Panc1 (cell line): ENCODE measurements at regions of chr1 and their contacts with region 1.

Region 1: DNA sequence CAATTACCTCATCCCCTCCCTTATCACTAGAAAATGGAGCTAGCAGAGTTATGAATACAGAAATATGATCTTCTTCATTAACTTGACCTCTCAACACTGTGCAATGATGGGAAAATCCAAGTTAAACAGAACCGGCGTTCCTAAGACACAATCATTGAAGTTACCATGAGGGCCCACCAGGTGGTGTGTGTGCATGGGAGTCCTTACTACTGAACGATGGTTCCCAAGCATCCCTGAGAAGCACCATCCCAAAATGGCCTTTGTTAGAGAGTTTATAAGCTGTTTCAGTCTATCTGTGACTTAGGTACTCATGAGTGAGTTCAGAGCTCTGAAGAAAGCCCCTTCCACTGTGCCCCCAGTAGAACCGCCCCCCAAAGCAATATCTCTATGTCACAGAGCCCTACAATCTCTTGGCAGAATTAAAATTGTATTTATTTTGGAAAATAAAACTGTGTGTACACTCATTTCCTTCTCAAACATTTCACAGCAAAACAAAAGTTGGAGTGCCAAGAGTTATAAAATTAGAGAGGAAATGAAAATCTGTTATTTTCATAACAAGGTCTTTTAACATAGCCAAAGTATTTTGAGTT is 56.8 kb downstream of the PLD5 start:
- DNase-seq: peak; percentile 28
- ATAC-seq: peak; percentile 90
- H3K4me3 ChIP-seq: no peak overlapping the region
- H3K27ac ChIP-seq: no peak overlapping the region
- H3K4me1 ChIP-seq: no peaks in the 10 kb centered on the region
- H3K27me3 ChIP-seq: no peaks in the 10 kb centered on the region
- CTCF ChIP-seq: peak; percentile 79

Region 2: DNA sequence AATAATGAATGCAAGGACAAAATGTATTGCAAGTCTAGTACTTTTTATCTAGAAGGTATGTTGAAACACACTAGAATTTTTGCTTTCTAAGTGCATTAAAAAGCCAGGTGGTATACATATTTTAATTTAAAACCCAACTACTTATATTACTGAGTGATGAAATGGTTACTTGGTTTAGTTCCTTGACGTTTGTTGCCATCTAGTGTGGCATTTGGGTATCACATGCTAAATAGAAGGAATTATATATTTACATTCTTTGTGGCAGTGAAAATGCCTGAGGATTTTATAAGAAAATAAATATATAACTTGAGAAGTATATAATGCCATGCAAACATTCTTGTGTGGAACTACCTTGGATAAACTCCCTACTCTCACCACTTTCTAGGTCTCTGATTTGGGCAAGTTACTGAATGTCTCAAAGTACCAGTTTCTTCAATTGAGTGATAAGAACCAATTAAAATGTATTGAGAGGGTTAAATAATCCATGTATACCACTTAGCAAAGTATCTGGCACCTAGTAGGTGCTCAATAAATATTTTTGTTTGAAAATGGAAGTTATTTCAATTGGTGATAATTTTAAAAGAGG is 857.7 kb after region 1 on chr1:
- CTCF ChIA-PET with region 1: no interaction called
- POLR2A ChIA-PET with region 1: no interaction called
- in situ Hi-C with region 1: no loop called
- intact Hi-C with region 1: loop called (anchors 10 kb)
- DNase-seq: peak; percentile 51
- ATAC-seq: no peak; the same call in 1 of the 2 replicates
- H3K4me3 ChIP-seq: no peak overlapping the region
- H3K27ac ChIP-seq: no peak overlapping the region
- H3K4me1 ChIP-seq: no peaks in the 10 kb centered on the region
- H3K27me3 ChIP-seq: no peaks in the 10 kb centered on the region
- CTCF ChIP-seq: peak; percentile 68; the same call in 1 of the 2 replicates